Heart right ventricle (tissue), 16 donors: ENCODE measurements at regions of chr16 and their contacts with region 1.

Region 1: GRCh38 chr16:26961459-26961858 is 105.3 kb upstream of the C16orf82 start:
- DNase-seq: no peak
- ATAC-seq: no peak
- H3K4me3 ChIP-seq: no peak overlapping the region
- H3K27ac ChIP-seq: no peak overlapping the region
- H3K4me1 ChIP-seq: no peaks in the 10 kb centered on the region
- H3K27me3 ChIP-seq: peaks cover 0 to 13% (median 5%) of the 10 kb centered on the region in 7 donors
- CTCF ChIP-seq: no peak

Region 2: GRCh38 chr16:26442321-26442720 is 519.1 kb before region 1 on chr16:
- intact Hi-C with region 1: loop called in 1 of 10 experiments (anchors 2 kb)
- DNase-seq: no peak
- ATAC-seq: no peak
- H3K4me3 ChIP-seq: no peak overlapping the region
- H3K27ac ChIP-seq: peak overlapping the region in 5 of 10 donors; percentile 1 to 53 (median 30)
- H3K4me1 ChIP-seq: no peaks in the 10 kb centered on the region
- H3K27me3 ChIP-seq: no peaks in the 10 kb centered on the region
- CTCF ChIP-seq: no peak